Cardiac septum (tissue), 1 donor: ENCODE measurements at regions of chr12 and their contacts with region 1.

Region 1: GRCh38 chr12:108731105-108731865 is at the start of gene CORO1C:
- DNase-seq: peak; percentile 99
- total RNA-seq, gene CORO1C: 74.7 TPM

Region 2: GRCh38 chr12:108576660-108577234 is 154.5 kb before region 1 on chr12:
- intact Hi-C with region 1: no loop called
- DNase-seq: peak; percentile 36

Region 3: GRCh38 chr12:108629824-108630476 is 101.3 kb before region 1 on chr12:
- intact Hi-C with region 1: no loop called
- DNase-seq: peak; percentile 78

Region 4: GRCh38 chr12:108664338-108665258 is 66.7 kb before region 1 on chr12:
- intact Hi-C with region 1: loop called (anchors 2 kb)
- DNase-seq: peak; percentile 92

Region 5: GRCh38 chr12:108678104-108678730 is 53.1 kb before region 1 on chr12:
- intact Hi-C with region 1: no loop called
- DNase-seq: no peak

Region 6: GRCh38 chr12:108691175-108691997 is 39.9 kb before region 1 on chr12:
- intact Hi-C with region 1: loop called (anchors 2 kb)
- DNase-seq: peak; percentile 96

Region 7: GRCh38 chr12:108770269-108770829 is 39.1 kb after region 1 on chr12:
- intact Hi-C with region 1: loop called (anchors 2 kb)
- DNase-seq: no peak

Region 8: DNA sequence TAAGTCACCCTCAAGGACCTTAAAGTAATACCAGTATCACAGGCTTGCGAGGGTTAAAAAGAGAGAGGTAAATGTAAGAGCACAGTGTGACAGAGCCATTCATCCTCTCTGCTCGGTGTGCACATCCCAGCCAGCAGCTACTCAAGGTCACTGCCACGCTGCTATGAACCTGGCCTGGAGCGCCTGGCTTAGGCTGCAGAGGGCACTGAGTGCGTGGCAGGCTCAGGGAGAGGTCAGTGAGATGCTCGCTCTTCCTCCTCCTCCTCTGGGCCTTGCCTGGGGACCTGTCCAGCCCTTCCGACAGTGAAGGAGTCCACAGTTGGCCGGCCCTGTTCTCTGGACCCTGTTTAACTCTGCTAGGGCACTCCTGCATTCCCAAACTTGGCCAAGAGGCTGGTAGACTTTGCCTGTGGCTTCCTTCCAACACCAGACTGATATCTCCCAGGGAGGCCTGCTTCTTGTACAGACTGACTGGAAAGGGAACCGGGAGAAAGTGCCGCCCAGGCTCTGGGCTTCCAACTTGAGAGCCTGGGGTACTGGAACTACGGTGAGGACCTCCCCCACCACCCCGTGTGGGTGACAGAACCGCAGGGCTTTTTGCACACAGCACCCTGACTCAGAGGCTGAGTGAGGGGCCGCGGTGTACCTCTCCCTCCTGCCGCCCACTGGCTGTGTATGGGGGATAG is 62.6 kb after region 1 on chr12:
- intact Hi-C with region 1: loop called (anchors 2 kb)
- DNase-seq: no peak

Region 9: DNA sequence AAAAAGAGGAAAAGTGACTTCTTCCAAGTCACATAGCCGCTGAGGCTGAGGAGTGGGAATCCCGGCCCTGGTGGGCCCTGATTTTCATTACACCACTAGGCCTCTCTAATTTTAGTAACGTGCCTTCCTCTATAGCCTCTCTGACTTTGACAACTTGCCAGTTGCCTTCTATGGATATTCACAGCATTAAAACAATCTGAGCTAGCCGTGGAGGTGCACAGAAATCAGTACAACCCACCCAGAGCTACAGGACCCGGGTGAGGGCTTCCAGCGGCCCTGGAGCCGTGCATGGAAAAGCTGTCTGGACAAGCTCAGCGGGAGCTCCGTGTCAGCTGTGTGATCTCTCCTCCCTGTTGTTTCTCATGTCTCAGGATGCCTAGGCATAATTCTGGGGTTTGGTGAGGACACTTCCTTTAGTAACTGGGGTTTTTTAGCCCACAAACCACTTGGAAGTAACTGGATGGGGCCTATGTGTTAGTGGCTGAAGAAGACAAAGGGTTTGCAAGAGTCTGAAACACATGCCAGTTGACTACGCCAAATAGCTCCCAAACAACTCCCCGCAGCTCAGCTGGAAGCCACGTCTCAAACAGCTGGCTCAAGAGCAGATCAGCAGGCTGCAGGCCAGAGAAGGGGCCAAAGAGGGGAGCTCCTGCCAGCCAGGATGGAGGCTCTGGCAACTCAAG is 73.1 kb after region 1 on chr12:
- intact Hi-C with region 1: no loop called
- DNase-seq: no peak

Region 10: GRCh38 chr12:108850854-108851573 is 119.7 kb after region 1 on chr12:
- intact Hi-C with region 1: loop called (anchors 5 kb)
- DNase-seq: peak; percentile 87